Panc1 (cell line): ENCODE measurements at regions of chr16 and their contacts with region 1.

Region 1: GRCh38 chr16:12362482-12363458 is 386.2 kb downstream of the SNX29 start:
- DNase-seq: no peak
- ATAC-seq: no peak
- H3K4me3 ChIP-seq: no peak overlapping the region
- H3K27ac ChIP-seq: no peak overlapping the region
- H3K4me1 ChIP-seq: no peaks in the 10 kb centered on the region
- H3K27me3 ChIP-seq: no peaks in the 10 kb centered on the region
- CTCF ChIP-seq: no peak

Region 2: DNA sequence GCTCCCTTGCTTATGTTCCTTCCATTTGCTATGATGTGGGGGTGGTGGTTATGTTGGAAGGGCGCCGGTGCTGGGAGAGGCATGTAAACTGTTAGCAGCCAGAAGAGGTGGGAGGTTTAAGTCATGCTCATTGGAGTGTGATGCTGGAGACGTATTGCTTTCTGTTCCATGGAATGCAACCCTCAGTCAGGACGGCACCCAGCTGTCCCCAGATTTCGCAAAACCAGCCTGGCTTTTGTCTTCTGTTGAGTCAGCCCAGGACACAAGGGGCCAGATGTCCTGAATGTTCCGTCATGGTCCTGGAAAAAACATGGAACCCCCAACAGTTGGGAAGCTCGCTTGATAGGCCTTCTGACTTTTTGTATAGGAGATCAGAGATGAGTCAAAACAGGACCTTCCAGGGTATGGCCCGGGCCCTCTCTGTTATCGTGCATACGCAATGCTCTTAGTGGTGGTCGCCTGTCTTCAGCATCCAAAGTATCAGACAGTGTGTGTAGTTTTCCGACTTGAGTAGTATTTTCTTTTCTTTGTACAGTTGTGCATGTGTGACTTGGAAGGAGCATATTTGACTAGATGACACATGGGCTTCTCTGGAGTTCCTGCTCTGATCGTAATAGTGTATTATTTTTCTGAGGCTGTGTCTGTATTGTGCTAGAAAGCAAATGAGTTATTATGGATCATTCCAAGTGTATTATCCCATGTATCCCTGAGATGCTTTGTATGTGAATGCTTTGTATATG is 184.3 kb before region 1 on chr16:
- CTCF ChIA-PET with region 1: no interaction called
- POLR2A ChIA-PET with region 1: interaction called, 10 read pairs
- in situ Hi-C with region 1: no loop called
- intact Hi-C with region 1: no loop called
- DNase-seq: no peak
- ATAC-seq: no peak
- H3K4me3 ChIP-seq: no peak overlapping the region
- H3K27ac ChIP-seq: no peak overlapping the region
- H3K4me1 ChIP-seq: no peaks in the 10 kb centered on the region
- H3K27me3 ChIP-seq: no peaks in the 10 kb centered on the region
- CTCF ChIP-seq: no peak